ENCODE measurements at regions of chr15 and their contacts with region 1.

Region 1: DNA sequence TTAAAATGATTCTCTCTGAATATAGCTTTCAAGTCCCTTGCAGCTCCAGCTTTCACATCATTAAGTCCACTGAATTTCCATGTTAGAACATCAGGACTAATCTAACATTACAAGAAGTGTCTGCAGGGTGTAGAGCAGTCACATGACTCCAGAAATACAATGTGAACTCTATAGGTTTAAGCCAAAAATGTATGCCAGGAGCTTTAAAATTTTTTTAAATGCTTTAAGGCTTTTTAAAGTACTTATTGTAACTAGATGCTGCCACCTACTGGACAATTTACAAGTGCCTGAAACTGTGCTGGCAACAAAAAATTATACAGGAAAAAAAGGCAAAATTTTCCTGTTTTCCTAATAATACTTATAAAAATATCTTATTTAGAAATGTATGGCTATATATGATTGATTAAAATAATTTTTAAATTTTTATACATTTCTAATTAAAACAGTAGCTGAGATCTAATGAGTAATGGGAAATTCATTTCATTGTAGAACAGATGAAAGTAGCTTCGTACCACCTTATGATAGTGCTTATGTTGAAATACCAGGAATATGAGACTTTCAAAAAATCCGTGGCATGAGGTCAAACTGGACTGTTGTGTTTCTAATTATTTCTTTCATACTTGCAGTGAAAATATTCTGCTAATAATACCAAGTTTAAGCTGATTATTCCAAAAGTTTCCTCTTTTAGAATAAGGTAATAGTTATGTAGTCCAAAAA is 25.7 kb downstream of the FSIP1 start:
- DNase-seq: peak in 1 of 2 donors; percentile 16
- ATAC-seq: peak in 1 of 8 donors; percentile 35
- H3K4me3 ChIP-seq: no peak overlapping the region
- H3K27ac ChIP-seq: no peak overlapping the region
- H3K4me1 ChIP-seq: peaks cover 0 to 7% (median 0%) of the 10 kb centered on the region in 9 donors
- H3K27me3 ChIP-seq: no peaks in the 10 kb centered on the region
- CTCF ChIP-seq: peak; percentile 52 to 94 (median 87)

Region 2: DNA sequence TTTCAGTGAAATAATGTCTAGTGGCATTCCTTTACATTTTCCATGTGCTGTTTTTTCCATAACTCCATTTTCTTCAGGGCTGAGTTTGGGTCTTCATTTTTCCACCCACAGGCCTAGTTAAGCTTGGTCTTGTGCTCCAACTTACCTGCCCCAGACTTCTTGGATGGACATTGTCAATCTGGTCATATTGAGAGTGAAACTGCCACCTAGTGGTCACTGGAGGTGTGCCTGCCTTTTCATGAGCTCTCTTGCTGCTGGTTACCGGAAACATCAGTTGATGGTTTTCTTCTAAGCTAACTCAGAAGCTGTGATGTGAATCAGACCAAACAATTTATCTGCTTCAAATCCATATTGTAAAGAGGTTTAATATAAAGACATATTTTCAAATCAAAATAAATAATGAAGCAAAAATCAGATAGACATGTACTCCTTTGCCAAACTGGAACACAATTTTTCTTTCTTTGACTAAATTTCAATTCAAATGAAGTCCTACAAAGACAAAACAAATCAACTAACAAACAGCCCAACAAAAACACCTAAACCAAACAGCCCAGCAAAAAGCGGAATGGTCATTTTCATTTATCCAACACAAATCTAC is 1057.2 kb before region 1 on chr15:
- intact Hi-C with region 1: loop called in 3 of 10 experiments (anchors 10 kb)
- DNase-seq: peak; percentile 11 to 55
- ATAC-seq: peak in 3 of 8 donors; percentile 40 to 50 (median 49)
- H3K4me3 ChIP-seq: no peak overlapping the region
- H3K27ac ChIP-seq: no peak overlapping the region
- H3K4me1 ChIP-seq: peaks cover 0 to 10% (median 0%) of the 10 kb centered on the region in 9 donors
- H3K27me3 ChIP-seq: peaks cover 0 to 15% (median 0%) of the 10 kb centered on the region in 7 donors
- CTCF ChIP-seq: peak; percentile 59 to 93 (median 81)

Region 3: GRCh38 chr15:38714309-38715072 is 1042.5 kb before region 1 on chr15:
- intact Hi-C with region 1: loop called in 8 of 10 experiments (anchors 5 to 10 kb)
- DNase-seq: no peak
- ATAC-seq: no peak
- H3K4me3 ChIP-seq: no peak overlapping the region
- H3K27ac ChIP-seq: no peak overlapping the region
- H3K4me1 ChIP-seq: no peaks in the 10 kb centered on the region
- H3K27me3 ChIP-seq: no peaks in the 10 kb centered on the region
- CTCF ChIP-seq: no peak

Region 4: DNA sequence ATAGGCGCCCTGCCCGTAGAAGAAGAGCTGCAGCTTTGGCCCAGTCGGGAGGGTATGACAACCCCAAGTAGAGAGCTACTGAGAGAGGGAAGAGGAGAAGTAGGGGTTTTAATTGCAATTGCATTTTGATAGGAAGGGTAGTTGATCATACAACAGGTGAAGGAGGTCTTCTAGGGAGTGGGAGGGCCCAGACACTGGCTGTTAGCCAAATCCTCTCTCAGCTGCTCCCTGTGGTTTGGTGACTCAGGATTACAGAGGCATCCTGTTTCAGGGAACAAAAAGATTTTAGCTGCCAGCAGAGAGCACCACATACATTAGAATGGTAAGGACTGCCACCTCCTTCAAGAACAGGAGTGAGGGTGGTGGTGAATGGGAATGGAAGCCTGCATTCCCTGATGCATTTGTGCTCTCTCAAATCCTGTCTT is 585.0 kb before region 1 on chr15:
- intact Hi-C with region 1: loop called in 3 of 10 experiments (anchors 5 to 10 kb)
- DNase-seq: peak in 1 of 2 donors; percentile 44
- ATAC-seq: peak; percentile 81 to 96 (median 90)
- H3K4me3 ChIP-seq: no peak overlapping the region
- H3K27ac ChIP-seq: peak overlapping the region in 6 of 10 donors; percentile 12 to 62 (median 29)
- H3K4me1 ChIP-seq: peaks cover 0 to 20% (median 9%) of the 10 kb centered on the region in 9 donors
- H3K27me3 ChIP-seq: no peaks in the 10 kb centered on the region
- CTCF ChIP-seq: peak in 7 of 9 donors; percentile 8 to 66 (median 55)

Region 5: DNA sequence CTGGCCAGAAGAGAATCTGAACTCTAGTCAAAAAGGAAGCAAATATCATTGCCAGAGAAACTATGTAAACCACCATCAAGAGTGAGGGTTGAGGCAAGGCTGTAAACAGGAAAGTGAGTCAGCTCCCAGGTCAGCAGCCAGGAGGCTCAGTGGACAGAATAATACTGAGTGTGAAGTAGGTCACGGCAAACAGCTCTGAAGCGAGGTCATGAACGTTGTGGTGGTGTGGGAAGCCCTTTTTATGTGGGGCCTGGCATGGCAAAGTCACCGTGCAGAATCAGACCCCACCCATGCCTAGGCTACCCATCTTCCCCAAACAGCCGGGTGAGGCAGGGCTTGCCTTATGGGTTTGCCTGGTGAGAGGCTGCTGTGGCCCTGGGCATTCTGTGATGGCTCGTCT is 132.2 kb before region 1 on chr15:
- intact Hi-C with region 1: loop called in 1 of 10 experiments (anchors 10 kb)
- DNase-seq: peak; percentile 33 to 52
- ATAC-seq: peak; percentile 58 to 85 (median 75)
- H3K4me3 ChIP-seq: no peak overlapping the region
- H3K27ac ChIP-seq: peak overlapping the region; percentile 26 to 87 (median 74)
- H3K4me1 ChIP-seq: peaks cover 21 to 68% (median 46%) of the 10 kb centered on the region in 9 donors
- H3K27me3 ChIP-seq: no peaks in the 10 kb centered on the region
- CTCF ChIP-seq: peak in 1 of 9 donors; percentile 27

Region 6: DNA sequence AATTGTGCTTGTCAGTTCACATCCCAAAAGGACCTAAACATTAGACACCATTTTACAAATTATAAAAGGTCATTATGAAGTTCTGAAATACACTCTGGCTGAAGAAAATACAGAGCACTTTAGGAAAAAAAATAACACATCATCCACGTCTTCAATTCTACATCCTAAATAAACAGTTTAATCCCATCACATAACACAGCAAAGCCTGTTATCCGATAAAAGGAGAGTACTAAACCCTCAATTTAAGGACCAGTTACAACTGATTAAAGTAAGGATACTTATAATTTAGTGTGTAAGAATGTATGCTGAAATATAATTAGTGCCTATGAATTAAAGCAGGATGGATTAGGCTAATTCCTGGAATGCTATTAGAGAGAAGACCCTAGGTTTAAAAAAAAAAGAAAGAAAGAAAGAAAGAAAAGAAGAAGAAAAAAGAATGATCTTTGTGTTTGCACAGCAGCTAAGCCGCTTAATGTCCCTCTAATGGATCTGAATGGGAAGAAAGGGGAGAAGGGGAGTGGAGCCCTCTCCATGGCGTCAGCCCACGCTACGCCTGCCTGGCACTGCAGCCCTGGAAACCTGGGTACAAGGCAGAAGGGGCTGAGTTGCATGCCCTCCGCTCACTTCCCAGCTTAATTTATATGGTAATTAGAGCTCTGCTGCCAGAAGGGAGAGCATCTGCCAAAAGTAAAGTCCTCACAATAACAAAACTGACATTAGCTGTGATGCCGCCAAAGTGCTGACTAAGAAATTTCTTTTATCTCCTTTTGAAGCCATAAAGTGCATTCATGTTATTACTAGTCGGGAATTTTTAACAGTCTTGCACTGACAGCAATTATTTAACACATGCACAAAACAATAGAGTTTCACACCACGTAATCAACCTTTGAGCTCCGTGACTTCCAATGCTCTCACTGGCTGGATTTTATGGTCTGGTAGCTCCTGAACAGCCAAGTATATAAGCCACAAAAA is 64.3 kb before region 1 on chr15:
- intact Hi-C with region 1: loop called in 7 of 10 experiments (anchors 2 to 10 kb)
- DNase-seq: no peak
- ATAC-seq: no peak
- H3K4me3 ChIP-seq: no peak overlapping the region
- H3K27ac ChIP-seq: no peak overlapping the region
- H3K4me1 ChIP-seq: no peaks in the 10 kb centered on the region
- H3K27me3 ChIP-seq: no peaks in the 10 kb centered on the region
- CTCF ChIP-seq: no peak

Region 7: GRCh38 chr15:39804026-39804425 is 47.1 kb after region 1 on chr15:
- intact Hi-C with region 1: no loop called
- DNase-seq: no peak
- ATAC-seq: no peak
- H3K4me3 ChIP-seq: no peak overlapping the region
- H3K27ac ChIP-seq: no peak overlapping the region
- H3K4me1 ChIP-seq: peaks cover 0 to 13% (median 0%) of the 10 kb centered on the region in 9 donors
- H3K27me3 ChIP-seq: peaks cover 0 to 4% (median 0%) of the 10 kb centered on the region in 7 donors
- CTCF ChIP-seq: no peak